ENCODE measurements at regions of chr4 and their contacts with region 1.

Region 1: GRCh38 chr4:54217642-54218495 is 11.2 kb upstream of the PDGFRA start:
- DNase-seq: peak; percentile 80
- CTCF ChIP-seq: peak; percentile 83

Region 2: GRCh38 chr4:53015681-53016080 is 1202.2 kb before region 1 on chr4:
- in situ Hi-C with region 1: loop called (anchors 25 kb)
- DNase-seq: no peak
- CTCF ChIP-seq: no peak

Region 3: GRCh38 chr4:53490965-53491622 is 726.8 kb before region 1 on chr4:
- in situ Hi-C with region 1: loop called (anchors 25 kb)
- DNase-seq: peak; percentile 40
- CTCF ChIP-seq: peak; percentile 38

Region 4: GRCh38 chr4:53592686-53593501 is 625.0 kb before region 1 on chr4:
- in situ Hi-C with region 1: loop called (anchors 25 kb)
- DNase-seq: no peak
- CTCF ChIP-seq: no peak

Region 5: GRCh38 chr4:53702334-53703266 is 515.3 kb before region 1 on chr4:
- in situ Hi-C with region 1: loop called (anchors 25 kb)
- DNase-seq: peak; percentile 49
- CTCF ChIP-seq: no peak

Region 6: DNA sequence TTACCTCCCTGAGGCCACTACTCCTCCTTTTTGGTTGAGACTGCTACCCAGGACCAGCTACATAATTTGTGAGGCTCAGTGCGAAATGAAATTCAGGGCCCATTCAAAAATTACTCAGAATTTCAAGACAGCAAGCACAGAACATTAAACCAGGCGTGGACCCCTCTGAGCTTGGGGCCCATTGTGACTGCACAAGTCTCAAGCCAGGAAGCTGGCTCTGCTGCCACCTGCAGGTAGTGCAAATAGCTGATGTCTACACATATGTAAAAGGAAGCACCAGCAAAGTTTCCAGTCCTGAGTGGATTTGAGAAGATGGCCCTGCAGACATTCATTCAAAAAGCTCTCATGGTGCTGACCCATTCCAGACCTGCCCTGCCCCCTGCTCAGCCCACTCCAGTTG is 413.1 kb before region 1 on chr4:
- in situ Hi-C with region 1: no loop called
- DNase-seq: peak; percentile 36
- CTCF ChIP-seq: peak; percentile 72